H1 (cell line): ENCODE measurements at regions of chr9 and their contacts with region 1.

Region 1: GRCh38 chr9:97689401-97689800 is 7.7 kb downstream of the XPA start:
- DNase-seq: no peak
- H3K4me3 ChIP-seq: no peak overlapping the region
- H3K27ac ChIP-seq: no peak overlapping the region
- H3K4me1 ChIP-seq: no peaks in the 10 kb centered on the region
- H3K27me3 ChIP-seq: no peaks in the 10 kb centered on the region
- CTCF ChIP-seq: no peak
- EP300 ChIP-seq: no peak
- POLR2A ChIP-seq: no peak
- RAD21 ChIP-seq: no peak

Region 2: DNA sequence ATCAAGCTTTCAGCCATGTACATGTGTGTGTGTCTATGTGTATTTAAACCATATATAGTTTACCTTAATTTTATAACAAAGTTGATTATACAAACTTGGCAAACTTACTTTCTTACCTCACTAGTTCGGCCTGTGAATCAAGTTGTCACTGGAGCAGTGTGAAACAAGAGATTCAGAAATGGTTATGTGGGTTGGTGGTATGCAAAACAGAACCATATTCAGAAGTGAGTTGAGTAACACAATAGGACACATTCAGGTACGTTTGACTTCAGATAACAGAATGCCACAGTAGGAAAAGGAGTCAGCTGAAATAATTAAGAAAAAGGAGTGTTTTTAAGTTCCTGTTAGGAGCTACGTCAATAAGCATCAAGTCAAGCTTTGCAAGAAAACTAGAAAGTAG is 13.7 kb before region 1 on chr9:
- CTCF ChIA-PET with region 1: interaction called, 7 read pairs
- POLR2A ChIA-PET with region 1: interaction called, 15 read pairs
- DNase-seq: no peak
- H3K4me3 ChIP-seq: no peak overlapping the region
- H3K27ac ChIP-seq: no peak overlapping the region
- H3K4me1 ChIP-seq: no peaks in the 10 kb centered on the region
- H3K27me3 ChIP-seq: no peaks in the 10 kb centered on the region
- CTCF ChIP-seq: no peak
- EP300 ChIP-seq: no peak
- POLR2A ChIP-seq: no peak
- RAD21 ChIP-seq: no peak

Region 3: GRCh38 chr9:97703437-97704344 is 14.3 kb after region 1 on chr9:
- CTCF ChIA-PET with region 1: no interaction called
- POLR2A ChIA-PET with region 1: no interaction called
- DNase-seq: no peak
- H3K4me3 ChIP-seq: no peak overlapping the region
- H3K27ac ChIP-seq: no peak overlapping the region
- H3K4me1 ChIP-seq: no peaks in the 10 kb centered on the region
- H3K27me3 ChIP-seq: no peaks in the 10 kb centered on the region; a peak in 1 of 7 replicates
- CTCF ChIP-seq: no peak
- EP300 ChIP-seq: no peak
- POLR2A ChIP-seq: no peak
- RAD21 ChIP-seq: no peak